Posterior vena cava (tissue), 2 donors: ENCODE measurements at regions of chr2 and their contacts with region 1.

Region 1: GRCh38 chr2:75018162-75018561 is 59.7 kb downstream of the POLE4 start:
- DNase-seq: no peak

Region 2: GRCh38 chr2:75035444-75036353 is 17.5 kb after region 1 on chr2:
- intact Hi-C with region 1: no loop called
- DNase-seq: no peak

Region 3: DNA sequence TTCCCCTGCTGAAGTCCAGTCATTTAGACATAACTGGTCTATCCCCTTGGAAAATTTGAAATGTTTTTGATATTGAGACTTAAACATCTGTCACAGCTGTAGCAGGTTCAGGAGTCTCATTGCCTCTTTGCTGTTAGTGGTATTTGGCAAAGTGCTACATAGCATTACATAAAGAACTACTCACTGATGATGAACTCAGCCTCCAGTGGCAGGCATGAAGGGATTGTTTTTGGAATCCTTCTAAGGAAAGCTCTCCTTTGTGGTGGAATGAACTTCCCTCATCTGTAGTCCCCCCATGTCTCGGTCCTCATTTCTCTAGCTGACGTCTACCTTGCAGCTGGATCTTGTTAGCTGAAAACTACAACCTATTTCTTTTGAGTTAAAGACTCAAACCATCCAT is 69.6 kb after region 1 on chr2:
- intact Hi-C with region 1: loop called in 1 of 2 experiments (anchors 10 kb)
- DNase-seq: no peak

Region 4: DNA sequence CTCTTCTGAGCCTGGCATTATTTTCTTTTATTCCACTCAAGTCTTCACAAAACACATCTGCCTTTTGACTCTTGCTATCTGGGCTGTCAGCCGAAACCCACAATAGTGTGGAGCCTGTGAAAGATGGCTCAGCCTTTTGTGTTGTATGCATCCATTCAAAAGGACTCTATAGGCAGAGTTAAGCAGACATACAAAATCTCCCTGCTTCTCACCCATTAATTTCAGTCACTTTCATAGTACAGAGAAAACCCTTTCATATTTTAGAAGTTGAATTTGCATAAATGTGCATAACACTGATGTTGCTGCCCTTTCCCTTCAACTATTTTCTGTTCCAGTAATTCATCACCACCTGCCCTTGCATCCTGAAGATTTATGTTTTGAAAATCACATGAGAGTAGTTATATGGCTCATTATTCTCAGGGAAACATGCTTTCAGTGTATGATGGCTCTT is 388.0 kb after region 1 on chr2:
- intact Hi-C with region 1: no loop called
- DNase-seq: no peak